ENCODE measurements at regions of chr3 and their contacts with region 1.

Region 1: DNA sequence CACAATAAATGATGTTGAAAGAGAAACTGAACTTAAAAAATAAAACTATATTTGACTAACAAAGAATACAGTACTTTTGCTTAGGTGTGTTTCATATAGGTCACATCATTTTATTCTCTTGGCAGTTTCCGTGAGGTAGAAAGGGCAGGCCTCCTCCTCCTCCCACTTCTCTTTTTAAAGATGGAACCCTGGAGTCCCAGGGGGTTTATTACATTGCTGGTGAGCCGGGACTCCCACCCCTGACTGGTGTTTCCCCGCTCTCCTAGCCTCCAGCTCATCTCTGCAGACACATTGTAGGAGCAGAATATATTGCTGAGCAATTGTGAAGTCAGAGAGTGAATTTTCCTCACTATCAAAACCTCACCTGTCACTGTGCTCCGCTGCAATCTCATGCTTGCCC is 30.0 kb downstream of the ZDHHC23 start:
- DNase-seq: no peak

Region 2: GRCh38 chr3:113953677-113954076 is 24.1 kb before region 1 on chr3:
- intact Hi-C with region 1: no loop called
- DNase-seq: no peak

Region 3: DNA sequence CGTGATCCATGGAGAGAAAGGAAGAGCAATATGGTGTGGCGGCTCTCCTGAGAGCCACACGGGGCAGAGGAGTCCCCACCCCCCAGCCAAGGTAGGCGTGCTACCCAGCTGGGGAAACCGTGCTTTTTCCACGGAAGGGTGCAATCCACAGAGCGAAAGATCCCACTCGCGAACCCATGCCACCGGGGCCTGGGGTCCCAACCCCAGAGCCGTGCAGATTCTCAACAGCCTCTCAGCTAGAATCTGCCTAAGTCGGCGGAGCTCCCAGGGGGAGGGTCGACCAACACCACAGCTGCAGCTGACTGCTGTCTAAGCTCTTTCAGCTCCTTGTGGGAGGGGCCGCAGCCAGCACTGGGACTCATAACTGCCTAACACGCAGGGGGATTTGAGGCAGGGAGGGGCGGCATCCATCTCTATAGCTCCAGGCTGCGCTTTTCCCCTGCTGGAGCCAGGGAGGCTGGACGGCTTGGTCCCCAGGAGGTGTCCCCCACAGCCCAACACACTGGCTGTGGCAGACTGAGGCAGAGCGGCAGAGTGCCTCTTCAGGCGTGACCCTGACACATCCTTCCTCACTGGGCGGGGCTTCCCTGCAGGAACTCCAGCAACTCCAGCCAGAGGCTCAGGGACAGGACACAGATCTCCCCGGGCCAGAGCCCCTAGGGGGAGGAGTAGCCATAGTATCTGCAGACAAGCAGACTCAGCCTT is 1276.8 kb after region 1 on chr3:
- intact Hi-C with region 1: loop called in 1 of 2 experiments (anchors 5 kb)
- DNase-seq: peak; percentile 68